Activated CD4-positive, alpha-beta T cell treated with anti-CD3 and anti-CD28 coated beads, Interleukin-2, amount 10 ng/mL, durations not matched to agents 24 days and 14 days (primary cell): ENCODE measurements at regions of chr10 and their contacts with region 1.

Region 1: GRCh38 chr10:8245131-8245813 is 190.8 kb downstream of the GATA3 start:
- DNase-seq: peak; percentile 77
- H3K4me3 Mint-ChIP-seq: peak overlapping the region; percentile 67
- H3K27ac Mint-ChIP-seq: peak overlapping the region; percentile 88
- H3K4me1 Mint-ChIP-seq: peaks cover 55% of the 10 kb centered on the region
- H3K27me3 Mint-ChIP-seq: no peaks in the 10 kb centered on the region

Region 2: DNA sequence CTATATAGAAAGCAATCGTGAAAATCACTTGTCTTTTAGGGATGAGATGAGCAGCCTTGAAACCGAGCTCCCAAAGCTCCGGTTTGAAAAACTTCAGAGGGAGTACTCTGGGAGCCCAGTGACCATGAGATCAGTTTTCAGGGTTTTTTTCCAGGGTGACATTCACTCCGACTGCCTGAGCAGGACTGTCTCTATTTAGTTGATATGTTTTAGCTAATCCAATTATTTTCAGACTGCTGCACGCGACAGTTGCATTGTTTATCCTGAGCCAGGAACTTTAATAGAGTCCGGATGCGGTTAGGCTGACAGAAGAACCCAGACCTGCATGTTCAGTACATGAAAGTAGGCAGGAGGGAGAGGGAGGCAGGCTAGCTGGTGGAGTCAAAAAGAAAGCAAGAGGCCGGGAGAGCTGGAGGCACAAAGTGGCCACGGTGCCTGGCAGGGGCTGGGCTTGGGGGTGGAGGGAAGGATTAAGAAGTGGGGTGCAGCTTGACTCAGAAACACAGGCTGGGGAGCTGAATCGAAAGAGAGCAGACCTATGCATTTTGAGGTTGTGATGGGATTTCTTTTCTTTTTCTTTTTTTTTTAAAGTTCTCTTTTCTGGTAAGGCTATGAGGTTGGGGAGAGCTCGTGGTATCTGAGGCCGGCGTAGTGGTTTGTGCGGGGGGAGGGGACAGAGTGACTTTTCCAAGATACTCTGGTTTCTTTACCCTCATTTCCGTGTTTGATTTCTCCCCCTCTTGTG is 185.1 kb before region 1 on chr10:
- intact Hi-C with region 1: loop called (anchors 1 kb)
- DNase-seq: peak; percentile 92
- H3K4me3 Mint-ChIP-seq: peak overlapping the region; percentile 90
- H3K27ac Mint-ChIP-seq: peak overlapping the region; percentile 93
- H3K4me1 Mint-ChIP-seq: peaks cover 70% of the 10 kb centered on the region
- H3K27me3 Mint-ChIP-seq: peaks cover 2% of the 10 kb centered on the region

Region 3: GRCh38 chr10:8137726-8138125 is 107.5 kb before region 1 on chr10:
- intact Hi-C with region 1: loop called (anchors 1 kb)
- DNase-seq: no peak
- H3K4me3 Mint-ChIP-seq: peak overlapping the region; percentile 82
- H3K27ac Mint-ChIP-seq: peak overlapping the region; percentile 89
- H3K4me1 Mint-ChIP-seq: peaks cover 63% of the 10 kb centered on the region
- H3K27me3 Mint-ChIP-seq: no peaks in the 10 kb centered on the region

Region 4: DNA sequence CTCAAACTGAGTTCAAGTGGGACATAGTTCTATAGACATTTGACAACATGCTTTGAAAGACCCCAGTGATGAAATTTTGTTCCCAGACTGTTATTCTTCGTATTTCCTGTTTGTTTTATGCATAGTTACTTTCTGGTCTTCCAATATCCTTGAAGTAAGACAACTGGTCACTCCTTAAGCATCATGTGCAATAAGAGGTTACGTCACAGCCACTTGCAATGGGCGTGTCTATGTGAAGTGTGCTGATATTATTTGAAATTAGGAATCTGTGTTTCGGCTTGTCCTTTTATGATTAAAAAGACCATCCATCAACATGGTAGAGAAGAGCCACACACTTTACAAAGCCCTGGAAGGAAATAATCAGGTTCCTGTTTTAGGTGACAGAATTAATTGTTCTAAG is 40.7 kb before region 1 on chr10:
- intact Hi-C with region 1: no loop called
- DNase-seq: no peak
- H3K4me3 Mint-ChIP-seq: no peak overlapping the region
- H3K27ac Mint-ChIP-seq: no peak overlapping the region
- H3K4me1 Mint-ChIP-seq: peaks cover 4% of the 10 kb centered on the region
- H3K27me3 Mint-ChIP-seq: peaks cover 6% of the 10 kb centered on the region

Region 5: DNA sequence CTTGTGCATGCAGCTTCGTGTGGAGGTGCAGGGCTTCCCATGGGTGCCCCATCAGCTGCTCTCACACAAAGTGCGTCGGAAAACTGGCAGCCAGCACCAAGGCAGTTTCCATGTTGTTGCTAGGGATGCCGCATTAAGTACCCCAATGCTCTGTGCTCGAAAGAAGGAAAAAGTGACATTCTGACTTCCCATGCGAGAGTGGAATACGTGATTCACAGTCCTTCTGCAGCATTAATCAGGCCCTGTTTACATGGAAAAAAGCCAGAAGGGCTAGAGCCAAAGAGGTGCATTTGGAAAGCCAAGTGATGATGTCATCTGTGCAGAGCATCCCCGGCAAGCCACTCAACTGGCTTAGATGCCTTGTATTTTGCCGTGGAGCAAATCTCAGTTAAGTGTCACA is 67.5 kb after region 1 on chr10:
- intact Hi-C with region 1: loop called (anchors 1 kb)
- DNase-seq: no peak
- H3K4me3 Mint-ChIP-seq: no peak overlapping the region
- H3K27ac Mint-ChIP-seq: peak overlapping the region; percentile 64
- H3K4me1 Mint-ChIP-seq: peaks cover 34% of the 10 kb centered on the region
- H3K27me3 Mint-ChIP-seq: no peaks in the 10 kb centered on the region

Region 6: DNA sequence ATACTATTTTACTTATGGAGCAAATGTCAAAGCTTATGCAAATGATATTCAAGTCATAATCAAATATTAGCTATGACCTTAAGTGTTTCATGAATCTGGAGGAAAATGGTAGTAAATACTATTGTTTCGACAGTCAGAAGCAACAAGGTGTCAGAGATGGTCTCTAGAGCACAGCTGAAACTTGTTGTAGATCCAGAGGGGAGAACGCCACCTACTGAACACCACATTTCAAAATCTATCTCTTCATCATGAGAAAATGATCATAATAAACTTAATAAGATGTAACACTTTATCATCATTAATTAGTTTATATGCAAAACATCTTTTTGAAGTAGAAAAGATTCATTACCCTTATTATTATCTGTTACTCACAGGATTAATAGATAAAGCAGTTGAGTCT is 227.9 kb after region 1 on chr10:
- intact Hi-C with region 1: loop called (anchors 2 kb)
- DNase-seq: peak; percentile 75
- H3K4me3 Mint-ChIP-seq: no peak overlapping the region
- H3K27ac Mint-ChIP-seq: no peak overlapping the region
- H3K4me1 Mint-ChIP-seq: peaks cover 3% of the 10 kb centered on the region
- H3K27me3 Mint-ChIP-seq: peaks cover 30% of the 10 kb centered on the region

Region 7: DNA sequence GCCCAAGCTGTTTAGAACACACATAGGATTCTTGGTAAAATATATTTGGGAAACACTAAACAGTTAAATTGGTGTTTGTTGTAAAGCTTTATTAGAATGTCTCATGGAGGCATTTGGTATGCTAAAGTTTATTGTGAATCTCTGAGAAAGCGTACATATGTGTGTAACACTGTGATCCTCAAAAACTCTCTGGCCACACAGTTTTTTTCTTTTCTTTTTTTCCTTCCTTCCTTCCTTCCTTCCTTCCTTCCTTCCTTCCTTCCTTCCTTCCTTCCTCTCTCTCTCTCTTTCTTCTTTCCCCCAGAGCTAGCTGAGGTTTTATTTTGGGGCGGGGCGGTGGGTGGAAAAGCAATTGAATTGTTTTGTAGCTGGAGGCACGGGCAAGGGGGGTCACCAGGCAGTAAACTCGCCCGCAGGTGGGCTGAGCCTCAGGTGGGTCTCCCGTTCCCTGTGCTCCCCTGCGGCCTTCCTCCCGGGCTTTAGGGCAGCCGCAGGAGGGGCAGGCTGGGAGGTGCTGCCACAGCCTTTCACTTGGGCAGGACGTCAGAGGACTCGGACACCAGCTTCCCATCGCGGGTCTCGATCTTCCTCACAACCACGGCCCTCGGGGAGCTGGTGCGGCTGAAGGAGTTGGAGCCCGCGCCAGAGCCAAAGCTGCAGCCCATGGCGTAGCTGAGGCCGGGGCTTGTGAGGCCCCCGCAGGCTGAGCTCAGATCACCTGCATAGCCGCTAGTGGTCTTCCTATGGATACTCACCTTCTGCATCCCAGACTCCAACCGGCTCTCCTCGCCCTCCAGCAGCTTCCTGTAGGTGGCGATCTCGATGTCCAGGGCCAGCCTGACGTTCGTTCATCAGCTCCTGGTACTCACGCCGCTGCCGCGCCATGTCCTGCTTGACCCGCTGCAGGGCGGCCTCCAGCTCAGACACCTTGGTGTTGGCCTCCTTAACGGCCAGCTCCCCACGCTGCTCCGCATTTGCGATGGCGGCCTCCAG is 268.2 kb after region 1 on chr10:
- intact Hi-C with region 1: no loop called
- DNase-seq: no peak
- H3K4me3 Mint-ChIP-seq: no peak overlapping the region
- H3K27ac Mint-ChIP-seq: no peak overlapping the region
- H3K4me1 Mint-ChIP-seq: no peaks in the 10 kb centered on the region
- H3K27me3 Mint-ChIP-seq: peaks cover 17% of the 10 kb centered on the region

Region 8: DNA sequence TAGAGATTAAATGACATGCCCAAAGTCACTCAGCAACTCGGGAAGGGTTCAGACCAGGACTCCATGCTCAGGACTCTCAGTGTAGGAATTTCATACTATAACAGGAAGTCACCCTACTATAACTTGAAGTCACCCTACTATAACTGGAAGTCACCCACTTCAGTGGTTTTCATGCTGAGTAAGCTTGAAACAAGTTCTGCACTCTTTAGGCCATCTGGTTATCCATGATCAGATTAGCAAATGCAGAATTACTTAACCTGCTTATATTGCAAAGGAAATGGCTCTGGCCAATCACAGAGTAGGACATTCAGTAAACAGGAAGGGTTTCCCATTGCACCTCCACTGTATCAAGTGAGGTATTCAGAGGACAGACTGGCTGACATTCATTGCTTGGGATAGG is 1049.6 kb after region 1 on chr10:
- intact Hi-C with region 1: loop called (anchors 10 kb)
- DNase-seq: peak; percentile 67
- H3K4me3 Mint-ChIP-seq: no peak overlapping the region
- H3K27ac Mint-ChIP-seq: peak overlapping the region; percentile 20
- H3K4me1 Mint-ChIP-seq: peaks cover 12% of the 10 kb centered on the region
- H3K27me3 Mint-ChIP-seq: peaks cover 2% of the 10 kb centered on the region